ENCODE measurements at regions of chr6 and their contacts with region 1.

Region 1: DNA sequence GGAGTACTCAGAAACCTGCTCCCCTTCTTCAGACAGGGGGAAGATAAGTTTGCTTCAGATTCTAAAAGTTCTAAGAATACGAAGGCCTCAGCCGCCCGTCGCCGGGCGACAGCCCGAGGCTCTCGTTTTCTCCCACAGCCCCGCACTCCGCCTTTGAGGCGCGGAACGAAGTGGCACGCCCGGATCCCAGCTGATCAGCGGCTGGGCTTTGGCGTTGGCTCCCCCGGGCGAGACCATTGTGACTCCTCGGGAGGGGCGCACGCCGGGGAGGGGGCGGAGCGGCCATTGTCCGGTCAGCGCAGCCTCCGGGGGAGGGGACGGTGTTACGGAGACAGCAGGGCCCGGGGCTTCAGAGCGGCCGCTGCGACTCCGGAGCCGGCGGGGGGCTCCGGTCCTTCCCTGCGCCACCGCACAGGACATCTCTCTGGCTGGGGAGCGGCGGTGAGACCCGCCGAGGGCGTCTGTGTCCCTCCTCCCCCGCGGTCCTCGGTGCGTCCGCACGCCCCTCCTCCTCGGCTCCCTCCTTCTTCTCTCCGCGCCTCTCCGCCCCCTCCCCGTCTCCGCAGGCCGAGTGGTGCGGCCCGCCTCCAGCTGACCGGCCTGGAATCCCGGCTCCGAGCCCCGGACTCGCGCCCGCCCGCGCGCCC is at the start of gene ZFAND3:
- DNase-seq: peak; percentile 95 to 98 (median 96)
- ATAC-seq: peak; percentile 90
- H3K4me3 ChIP-seq: peak within 1 kb of the TSS; percentile 61
- H3K27ac ChIP-seq: peak within 1 kb of the TSS; percentile 87
- H3K4me1 ChIP-seq: peaks cover 17 to 38% of the 10 kb centered on the region in 2 experiments; a peak in 3 of 5 replicates
- H3K27me3 ChIP-seq: no peaks in the 10 kb centered on the region
- CTCF ChIP-seq: no peak
- EP300 ChIP-seq: no peak
- POLR2A ChIP-seq: no peak
- RAD21 ChIP-seq: no peak
- polyA plus RNA-seq, gene ZFAND3: 0.81 to 0.87 TPM

Region 2: GRCh38 chr6:37779111-37779800 is 40.0 kb before region 1 on chr6:
- CTCF ChIA-PET with region 1: no interaction called
- POLR2A ChIA-PET with region 1: no interaction called
- in situ Hi-C with region 1: no loop called
- intact Hi-C with region 1: no loop called
- DNase-seq: no peak
- ATAC-seq: no peak
- H3K4me3 ChIP-seq: no peak overlapping the region
- H3K27ac ChIP-seq: no peak overlapping the region
- H3K4me1 ChIP-seq: peaks cover 4 to 9% of the 10 kb centered on the region in 2 experiments; a peak in 1 of 5 replicates
- H3K27me3 ChIP-seq: peaks cover 34 to 74% of the 10 kb centered on the region in 2 experiments
- CTCF ChIP-seq: no peak
- EP300 ChIP-seq: no peak
- POLR2A ChIP-seq: no peak
- RAD21 ChIP-seq: no peak

Region 3: GRCh38 chr6:37807656-37808055 is 11.6 kb before region 1 on chr6:
- CTCF ChIA-PET with region 1: no interaction called
- POLR2A ChIA-PET with region 1: interaction called, 30 read pairs
- in situ Hi-C with region 1: no loop called
- intact Hi-C with region 1: no loop called
- DNase-seq: no peak
- ATAC-seq: peak; percentile 60
- H3K4me3 ChIP-seq: no peak overlapping the region
- H3K27ac ChIP-seq: no peak overlapping the region
- H3K4me1 ChIP-seq: no peaks in the 10 kb centered on the region
- H3K27me3 ChIP-seq: peaks cover 21 to 34% of the 10 kb centered on the region in 2 experiments
- CTCF ChIP-seq: no peak
- EP300 ChIP-seq: no peak
- POLR2A ChIP-seq: no peak
- RAD21 ChIP-seq: no peak

Region 4: GRCh38 chr6:37831457-37831856 is 12.2 kb after region 1 on chr6:
- CTCF ChIA-PET with region 1: no interaction called
- POLR2A ChIA-PET with region 1: interaction called, 26 read pairs
- in situ Hi-C with region 1: no loop called
- intact Hi-C with region 1: no loop called
- DNase-seq: no peak
- ATAC-seq: no peak; the same call in 2 of the 3 replicates
- H3K4me3 ChIP-seq: no peak overlapping the region
- H3K27ac ChIP-seq: no peak overlapping the region
- H3K4me1 ChIP-seq: peaks cover 0 to 7% of the 10 kb centered on the region in 2 experiments; a peak in 4 of 5 replicates
- H3K27me3 ChIP-seq: no peaks in the 10 kb centered on the region
- CTCF ChIP-seq: no peak
- EP300 ChIP-seq: no peak
- POLR2A ChIP-seq: no peak
- RAD21 ChIP-seq: no peak

Region 5: GRCh38 chr6:37840940-37841300 is 21.6 kb after region 1 on chr6:
- CTCF ChIA-PET with region 1: no interaction called
- POLR2A ChIA-PET with region 1: interaction called, 9 read pairs
- in situ Hi-C with region 1: no loop called
- intact Hi-C with region 1: loop called (anchors 2 kb)
- DNase-seq: no peak
- ATAC-seq: no peak
- H3K4me3 ChIP-seq: no peak overlapping the region
- H3K27ac ChIP-seq: no peak overlapping the region; the same call in 2 of the 3 replicates
- H3K4me1 ChIP-seq: peaks cover 2 to 17% of the 10 kb centered on the region in 2 experiments; a peak in 4 of 5 replicates
- H3K27me3 ChIP-seq: no peaks in the 10 kb centered on the region
- CTCF ChIP-seq: no peak
- EP300 ChIP-seq: no peak
- POLR2A ChIP-seq: no peak
- RAD21 ChIP-seq: no peak